ENCODE measurements at regions of chr18 and their contacts with region 1.

Region 1: DNA sequence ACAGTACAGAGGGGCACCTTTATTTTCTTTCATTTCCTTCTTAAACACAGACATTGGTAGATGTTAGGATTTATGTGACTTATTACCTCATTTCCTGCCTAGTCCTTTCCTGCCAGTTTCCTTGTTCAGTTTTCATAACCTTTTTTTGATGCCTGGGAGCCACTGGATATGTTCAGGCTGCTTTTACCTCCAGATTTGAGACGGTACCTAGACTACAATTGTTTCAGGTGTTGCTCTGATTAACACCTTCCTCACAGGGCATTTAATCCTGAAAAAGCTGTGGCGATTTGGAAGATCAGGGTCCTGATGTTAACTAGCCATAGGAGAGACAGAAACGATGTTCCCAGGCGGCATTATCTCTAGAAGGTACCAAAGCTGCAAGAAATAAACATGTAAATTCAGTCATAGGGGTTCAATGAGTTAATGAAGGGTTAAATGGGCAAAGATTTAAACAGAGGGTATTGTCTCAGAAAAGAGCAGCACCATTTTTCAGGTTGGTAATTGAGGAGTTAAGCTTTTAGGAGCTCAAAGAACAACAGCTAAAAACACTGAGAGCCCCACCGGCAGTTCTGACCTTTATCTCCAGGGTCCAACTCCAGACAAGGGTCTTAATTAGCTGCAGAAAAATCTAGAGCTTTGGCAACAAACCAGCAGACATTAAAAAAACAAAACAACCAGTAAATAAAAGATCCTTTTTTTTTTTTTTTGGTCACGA is 93.3 kb downstream of the HRH4 start:
- DNase-seq: peak; percentile 12
- H3K4me3 ChIP-seq: no peak overlapping the region
- H3K27ac ChIP-seq: no peak overlapping the region
- H3K4me1 ChIP-seq: peaks cover 4% of the 10 kb centered on the region
- H3K27me3 ChIP-seq: no peaks in the 10 kb centered on the region
- CTCF ChIP-seq: no peak

Region 2: DNA sequence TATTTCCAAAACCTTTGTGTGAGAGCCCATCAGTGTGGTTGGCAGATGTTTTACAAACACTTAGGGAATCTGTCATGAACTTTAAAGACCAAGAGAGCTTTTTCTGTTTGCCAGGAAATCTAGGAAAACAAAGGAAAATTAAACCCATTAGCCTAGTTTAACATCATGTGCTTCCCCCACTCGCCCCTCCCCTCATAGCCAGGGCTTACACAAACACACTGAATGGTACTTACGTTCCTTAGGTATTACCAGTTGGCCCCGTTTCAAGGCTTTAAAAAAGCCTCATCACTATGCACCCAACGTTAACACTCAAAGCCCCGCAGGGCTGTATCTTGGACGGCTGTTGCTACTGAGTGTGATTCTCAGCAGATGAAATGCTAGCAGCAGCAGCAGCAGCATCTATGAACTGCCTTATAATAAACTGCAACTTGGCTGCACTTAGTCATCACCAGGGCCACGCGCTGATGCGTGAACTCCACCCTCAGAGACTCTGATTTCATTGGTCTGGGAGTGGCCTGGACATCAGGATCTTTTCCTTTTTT is 559.3 kb before region 1 on chr18:
- CTCF ChIA-PET with region 1: no interaction called
- POLR2A ChIA-PET with region 1: no interaction called
- intact Hi-C with region 1: no loop called
- DNase-seq: peak; percentile 22
- H3K4me3 ChIP-seq: no peak overlapping the region
- H3K27ac ChIP-seq: no peak overlapping the region
- H3K4me1 ChIP-seq: peaks cover 6% of the 10 kb centered on the region
- H3K27me3 ChIP-seq: no peaks in the 10 kb centered on the region
- CTCF ChIP-seq: no peak

Region 3: DNA sequence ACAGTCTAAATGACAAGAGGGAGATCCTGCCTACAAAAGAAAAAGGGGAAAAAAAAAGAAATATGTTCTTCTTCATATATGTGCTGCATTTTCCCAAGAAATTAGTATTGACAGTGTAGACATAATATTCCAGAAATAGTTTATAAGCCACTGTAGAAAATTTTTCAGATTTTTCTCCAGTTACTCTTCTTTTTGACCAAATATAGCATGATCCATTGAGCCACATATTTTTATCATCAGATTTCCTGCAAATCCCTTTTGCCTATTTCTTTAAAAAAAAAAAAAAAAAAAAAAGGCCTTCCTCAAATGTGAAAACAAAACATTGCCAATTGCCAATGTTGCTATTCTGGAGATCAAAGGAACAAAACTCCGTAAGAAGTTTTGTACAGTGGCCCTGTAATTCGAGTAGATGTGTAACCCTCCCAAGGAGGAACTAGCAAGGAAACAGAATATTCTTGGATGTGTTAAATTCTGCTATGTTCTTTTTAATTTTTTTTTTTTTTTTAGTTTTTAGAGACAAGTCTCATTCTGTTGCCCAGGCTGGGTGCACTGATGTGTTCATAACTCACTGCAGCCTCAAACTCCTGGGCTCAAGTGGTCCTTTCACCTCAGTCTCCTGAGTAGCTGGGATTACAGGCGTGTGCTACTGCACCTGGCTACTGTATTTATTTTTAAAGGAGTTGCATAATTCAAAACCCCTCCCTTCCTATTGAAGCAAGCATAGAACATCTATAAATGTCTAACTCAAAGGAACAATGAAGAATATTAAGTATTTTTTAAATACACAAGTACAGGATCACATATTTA is 427.4 kb before region 1 on chr18:
- CTCF ChIA-PET with region 1: no interaction called
- POLR2A ChIA-PET with region 1: no interaction called
- intact Hi-C with region 1: no loop called
- DNase-seq: no peak
- H3K4me3 ChIP-seq: no peak overlapping the region
- H3K27ac ChIP-seq: no peak overlapping the region
- H3K4me1 ChIP-seq: no peaks in the 10 kb centered on the region
- H3K27me3 ChIP-seq: no peaks in the 10 kb centered on the region
- CTCF ChIP-seq: no peak

Region 4: GRCh38 chr18:24593886-24594285 is 40.2 kb after region 1 on chr18:
- CTCF ChIA-PET with region 1: no interaction called
- POLR2A ChIA-PET with region 1: no interaction called
- intact Hi-C with region 1: loop called (anchors 5 kb)
- DNase-seq: no peak
- H3K4me3 ChIP-seq: no peak overlapping the region
- H3K27ac ChIP-seq: no peak overlapping the region
- H3K4me1 ChIP-seq: no peaks in the 10 kb centered on the region
- H3K27me3 ChIP-seq: peaks cover 34% of the 10 kb centered on the region
- CTCF ChIP-seq: no peak

Region 5: DNA sequence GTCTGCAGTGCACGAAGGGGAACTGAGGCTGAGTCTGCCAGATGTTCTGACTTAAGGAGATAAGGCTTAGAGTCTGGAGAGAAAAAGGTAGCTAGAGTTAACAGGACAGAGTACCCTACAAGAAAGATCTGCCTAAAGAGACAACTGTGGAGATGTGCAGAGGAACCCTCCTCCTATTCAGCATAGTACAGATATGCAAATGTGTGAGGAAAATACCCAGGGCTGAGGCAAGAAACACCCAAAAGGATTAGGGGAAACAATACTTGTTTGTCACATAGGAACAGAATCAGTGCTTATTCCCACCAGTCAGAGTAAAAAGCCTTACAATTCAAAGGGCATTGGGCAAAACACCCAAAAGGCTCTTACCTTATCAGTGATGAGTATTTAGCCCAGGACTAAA is 1468.9 kb after region 1 on chr18:
- CTCF ChIA-PET with region 1: no interaction called
- POLR2A ChIA-PET with region 1: interaction called, 11 read pairs
- intact Hi-C with region 1: no loop called
- DNase-seq: no peak
- H3K4me3 ChIP-seq: no peak overlapping the region
- H3K27ac ChIP-seq: no peak overlapping the region
- H3K4me1 ChIP-seq: no peaks in the 10 kb centered on the region
- H3K27me3 ChIP-seq: no peaks in the 10 kb centered on the region
- CTCF ChIP-seq: no peak